GM13977 (cell line): ENCODE measurements at regions of chr17 and their contacts with region 1.

Region 1: GRCh38 chr17:34998205-34998604 is 17.9 kb downstream of the LIG3 start:
- DNase-seq: peak; percentile 86
- CTCF ChIP-seq: peak; percentile 97

Region 2: DNA sequence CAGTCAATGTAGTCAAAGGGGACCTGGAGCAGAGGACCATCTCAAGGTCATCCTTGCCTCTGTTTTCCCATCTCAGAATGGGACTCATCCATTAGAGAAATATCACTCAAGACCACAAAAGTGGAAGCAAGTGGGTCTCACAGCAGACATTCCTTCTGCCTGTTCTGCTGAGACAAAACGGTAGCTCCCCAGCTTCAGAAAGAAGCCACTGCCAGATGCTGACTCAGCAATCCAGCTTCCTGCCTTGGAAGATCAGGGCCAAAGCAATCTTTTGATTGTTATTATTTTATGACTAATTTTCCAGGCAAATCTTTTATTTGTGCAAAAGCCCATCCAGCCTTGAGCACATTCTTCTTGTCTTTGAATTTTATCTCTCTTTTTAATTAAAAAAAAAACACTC is 123.7 kb before region 1 on chr17:
- in situ Hi-C with region 1: no loop called
- DNase-seq: no peak
- CTCF ChIP-seq: no peak

Region 3: GRCh38 chr17:35103271-35103670 is 105.1 kb after region 1 on chr17:
- in situ Hi-C with region 1: loop called (anchors 10 kb)
- DNase-seq: no peak
- CTCF ChIP-seq: no peak